Kidney (tissue), 22 donors: ENCODE measurements at regions of chr10 and their contacts with region 1.

Region 1: GRCh38 chr10:794466-794865 is 105.0 kb upstream of the DIP2C start:
- DNase-seq: peak in 1 of 5 donors; percentile 34
- H3K4me3 ChIP-seq: no peak overlapping the region
- H3K27ac ChIP-seq: no peak overlapping the region
- H3K4me1 ChIP-seq: peaks cover 0 to 4% (median 0%) of the 10 kb centered on the region in 3 donors
- H3K27me3 ChIP-seq: no peaks in the 10 kb centered on the region
- CTCF ChIP-seq: peak; percentile 20

Region 2: GRCh38 chr10:458421-458851 is 336.0 kb before region 1 on chr10:
- intact Hi-C with region 1: no loop called
- DNase-seq: peak; percentile 83 to 96 (median 95)
- H3K4me3 ChIP-seq: no peak overlapping the region
- H3K27ac ChIP-seq: peak overlapping the region; percentile 60 to 65
- H3K4me1 ChIP-seq: peaks cover 0 to 14% (median 12%) of the 10 kb centered on the region in 3 donors
- H3K27me3 ChIP-seq: no peaks in the 10 kb centered on the region
- CTCF ChIP-seq: no peak

Region 3: GRCh38 chr10:511101-511848 is 283.2 kb before region 1 on chr10:
- intact Hi-C with region 1: loop called (anchors 5 kb)
- DNase-seq: peak; percentile 95 to 96 (median 96)
- H3K4me3 ChIP-seq: no peak overlapping the region
- H3K27ac ChIP-seq: peak overlapping the region in 1 of 2 donors; percentile 2
- H3K4me1 ChIP-seq: peaks cover 3 to 7% (median 3%) of the 10 kb centered on the region in 3 donors
- H3K27me3 ChIP-seq: no peaks in the 10 kb centered on the region
- CTCF ChIP-seq: peak; percentile 99

Region 4: DNA sequence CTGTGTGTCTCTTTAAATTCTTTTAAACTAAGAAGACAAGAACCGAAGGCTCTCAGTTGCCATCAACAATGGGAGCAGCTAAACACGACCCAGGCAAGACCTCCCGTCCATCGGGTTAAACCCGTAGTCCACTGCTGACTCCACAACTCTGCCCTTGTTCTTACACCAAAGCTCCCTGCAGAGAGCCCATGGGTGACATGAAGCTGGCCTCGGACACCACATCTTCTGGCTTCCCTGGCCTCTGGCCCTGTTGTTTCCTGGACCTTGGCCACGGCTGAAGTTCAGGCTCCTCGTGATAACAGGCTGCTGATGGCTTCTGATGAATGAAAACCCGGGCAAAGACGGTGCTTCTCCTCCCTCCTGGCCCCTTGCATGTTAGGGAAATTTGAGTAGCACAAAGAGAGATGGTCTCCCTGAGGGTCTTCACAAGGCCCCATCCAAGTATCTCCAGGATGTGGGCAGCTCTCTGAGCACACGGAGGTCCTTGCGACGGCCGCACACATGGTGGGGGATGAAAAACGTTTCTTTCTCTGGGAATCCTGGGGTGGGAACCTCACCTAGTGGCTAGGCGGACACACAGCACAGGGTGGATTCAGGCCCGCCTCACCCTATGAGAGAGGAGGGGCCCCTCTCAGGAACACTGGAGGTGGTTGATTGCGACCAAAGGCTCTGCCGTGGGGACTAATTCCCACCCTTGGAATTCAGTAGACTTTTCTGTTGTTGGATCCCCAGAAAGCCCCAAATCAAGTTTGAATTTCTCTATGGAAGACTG is 671.7 kb after region 1 on chr10:
- intact Hi-C with region 1: no loop called
- DNase-seq: no peak
- H3K4me3 ChIP-seq: peak overlapping the region in 1 of 3 donors; percentile 53
- H3K27ac ChIP-seq: no peak overlapping the region
- H3K4me1 ChIP-seq: peaks cover 0 to 18% (median 12%) of the 10 kb centered on the region in 3 donors
- H3K27me3 ChIP-seq: no peaks in the 10 kb centered on the region
- CTCF ChIP-seq: no peak